ENCODE measurements at regions of chrX and their contacts with region 1.

Region 1: GRCh38 chrX:96556886-96557285 is 127.8 kb upstream of the DIAPH2 start:
- DNase-seq: no peak
- H3K4me3 ChIP-seq: peak overlapping the region in 1 of 2 donors; percentile 27
- H3K27ac ChIP-seq: peak overlapping the region; percentile 51 to 54
- H3K4me1 ChIP-seq: no peaks in the 10 kb centered on the region
- H3K27me3 ChIP-seq: no peaks in the 10 kb centered on the region
- CTCF ChIP-seq: no peak

Region 2: DNA sequence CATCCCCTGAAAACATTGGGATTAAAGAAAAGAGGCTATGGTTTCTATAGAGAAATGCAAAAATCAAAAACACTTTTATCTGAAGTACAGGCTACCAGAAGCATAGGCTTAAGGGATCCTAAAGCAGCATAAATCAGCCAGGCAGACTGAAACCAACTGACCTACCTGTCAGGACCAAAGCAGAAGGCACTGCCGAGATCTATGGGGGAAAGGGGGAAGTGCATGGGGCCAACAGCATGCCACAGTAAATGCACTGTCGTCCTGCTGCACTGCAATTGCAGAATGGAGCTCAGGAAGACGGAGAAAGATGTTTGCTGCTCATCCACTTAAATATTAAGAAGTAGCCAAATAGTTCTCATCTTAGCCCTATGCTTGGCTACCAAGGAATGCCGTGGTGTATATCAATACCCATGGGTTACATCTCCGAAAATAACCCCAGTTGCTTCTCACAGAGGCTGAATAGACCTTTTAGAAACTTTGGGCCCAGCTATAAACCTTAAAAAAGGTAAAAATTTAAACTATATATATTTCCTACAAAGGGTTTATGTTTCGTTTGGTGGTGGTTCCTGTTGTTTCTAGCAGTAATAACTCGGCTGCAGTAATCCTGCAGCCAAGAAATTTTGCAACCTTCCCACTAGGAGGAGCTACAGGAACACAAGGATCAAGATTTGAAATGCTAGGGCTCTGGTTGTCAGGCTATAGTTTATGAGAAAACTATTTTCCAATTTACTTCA is 184.4 kb before region 1 on chrX:
- intact Hi-C with region 1: loop called (anchors 10 kb)
- DNase-seq: no peak
- H3K4me3 ChIP-seq: peak overlapping the region in 1 of 2 donors; percentile 41
- H3K27ac ChIP-seq: no peak overlapping the region
- H3K4me1 ChIP-seq: no peaks in the 10 kb centered on the region
- H3K27me3 ChIP-seq: no peaks in the 10 kb centered on the region
- CTCF ChIP-seq: peak in 2 of 3 experiments; percentile 50 to 62

Region 3: GRCh38 chrX:96394598-96394997 is 162.3 kb before region 1 on chrX:
- intact Hi-C with region 1: no loop called
- DNase-seq: no peak
- H3K4me3 ChIP-seq: no peak overlapping the region
- H3K27ac ChIP-seq: no peak overlapping the region
- H3K4me1 ChIP-seq: no peaks in the 10 kb centered on the region
- H3K27me3 ChIP-seq: no peaks in the 10 kb centered on the region
- CTCF ChIP-seq: no peak

Region 4: DNA sequence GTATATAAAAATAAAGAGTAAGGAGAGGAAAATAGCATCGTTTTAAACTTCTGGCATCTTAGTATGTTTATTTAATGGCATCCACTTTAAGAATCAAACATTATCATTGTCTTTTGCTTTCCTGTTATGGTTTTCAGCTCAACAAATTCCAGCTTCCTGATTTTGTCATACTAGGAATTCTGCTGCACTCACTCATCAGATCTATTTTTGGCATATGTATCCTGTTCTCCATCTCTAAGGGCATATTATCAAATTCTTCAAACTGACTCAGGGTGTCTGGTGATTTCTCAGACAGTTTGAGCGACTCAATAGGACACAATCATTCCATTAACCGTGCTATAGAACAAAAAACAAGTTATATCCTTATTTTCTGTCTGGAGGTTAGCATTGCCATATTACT is 120.8 kb before region 1 on chrX:
- intact Hi-C with region 1: loop called (anchors 10 kb)
- DNase-seq: no peak
- H3K4me3 ChIP-seq: no peak overlapping the region
- H3K27ac ChIP-seq: peak overlapping the region; percentile 30 to 63
- H3K4me1 ChIP-seq: peaks cover 0 to 3% of the 10 kb centered on the region in 2 donors
- H3K27me3 ChIP-seq: no peaks in the 10 kb centered on the region
- CTCF ChIP-seq: no peak

Region 5: GRCh38 chrX:96591421-96591820 is 34.5 kb after region 1 on chrX:
- intact Hi-C with region 1: no loop called
- DNase-seq: no peak
- H3K4me3 ChIP-seq: no peak overlapping the region
- H3K27ac ChIP-seq: no peak overlapping the region
- H3K4me1 ChIP-seq: no peaks in the 10 kb centered on the region
- H3K27me3 ChIP-seq: no peaks in the 10 kb centered on the region
- CTCF ChIP-seq: no peak

Measured in ascending aorta (tissue), 2 donors.